Cardiac septum (tissue), 1 donor: ENCODE measurements at regions of chr1 and their contacts with region 1.

Region 1: GRCh38 chr1:202745323-202745888 is 35.2 kb upstream of the SYT2 start:
- DNase-seq: no peak

Region 2: GRCh38 chr1:202998836-202999750 is 253.7 kb after region 1 on chr1:
- intact Hi-C with region 1: loop called (anchors 5 kb)
- DNase-seq: no peak